Sigmoid colon (tissue), 7 donors: ENCODE measurements at regions of chr9 and their contacts with region 1.

Region 1: DNA sequence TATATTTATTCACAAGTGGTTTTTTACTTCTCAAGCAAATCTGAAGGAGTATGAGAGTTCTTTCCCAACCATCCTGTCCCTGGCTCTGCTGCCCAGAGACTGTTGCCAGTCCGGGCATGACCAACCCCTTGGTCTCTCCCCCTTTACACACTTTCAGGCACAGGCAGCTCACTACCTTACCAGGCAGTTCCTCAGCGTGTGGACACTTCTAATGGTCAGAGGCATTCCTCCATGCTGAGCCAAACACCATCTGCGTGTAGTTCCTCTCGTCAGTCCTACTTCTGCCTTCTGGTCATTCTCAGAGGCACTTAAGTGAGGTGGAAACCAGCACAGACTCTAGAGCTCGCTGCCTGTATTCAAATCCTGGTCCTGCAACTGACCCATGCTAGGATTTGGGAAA is 56.1 kb downstream of the TSTD2 start:
- DNase-seq: no peak
- H3K4me3 ChIP-seq: no peak overlapping the region
- H3K27ac ChIP-seq: no peak overlapping the region
- H3K4me1 ChIP-seq: peaks cover 0 to 5% (median 4%) of the 10 kb centered on the region in 4 donors
- H3K27me3 ChIP-seq: no peaks in the 10 kb centered on the region
- CTCF ChIP-seq: no peak
- EP300 ChIP-seq: no peak
- POLR2A ChIP-seq: no peak

Region 2: DNA sequence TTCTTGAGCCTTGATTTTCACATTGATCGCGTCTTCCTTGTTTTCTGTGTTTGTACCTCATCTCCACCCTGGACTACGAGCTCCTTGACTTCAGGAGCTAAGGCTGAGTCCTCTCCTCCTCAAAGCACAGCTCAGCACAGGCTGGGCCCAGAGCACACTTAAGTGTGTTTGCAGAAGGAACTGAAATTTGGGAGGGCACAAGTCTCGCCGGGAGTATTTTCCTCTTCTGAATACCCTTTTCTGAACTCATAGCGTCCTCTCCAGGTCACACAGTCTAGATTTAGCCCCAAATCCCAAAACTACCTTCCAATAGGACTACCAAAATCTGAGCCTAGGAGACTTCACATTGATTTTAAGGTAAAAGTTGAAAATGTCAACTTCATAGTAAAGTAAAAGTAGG is 14.5 kb after region 1 on chr9:
- intact Hi-C with region 1: loop called (anchors 1 kb)
- DNase-seq: no peak
- H3K4me3 ChIP-seq: no peak overlapping the region
- H3K27ac ChIP-seq: no peak overlapping the region
- H3K4me1 ChIP-seq: peaks cover 0 to 30% (median 25%) of the 10 kb centered on the region in 4 donors
- H3K27me3 ChIP-seq: no peaks in the 10 kb centered on the region
- CTCF ChIP-seq: no peak
- EP300 ChIP-seq: no peak
- POLR2A ChIP-seq: no peak